Posterior cingulate gyrus (tissue), 11 donors: ENCODE measurements at regions of chr11 and their contacts with region 1.

Region 1: DNA sequence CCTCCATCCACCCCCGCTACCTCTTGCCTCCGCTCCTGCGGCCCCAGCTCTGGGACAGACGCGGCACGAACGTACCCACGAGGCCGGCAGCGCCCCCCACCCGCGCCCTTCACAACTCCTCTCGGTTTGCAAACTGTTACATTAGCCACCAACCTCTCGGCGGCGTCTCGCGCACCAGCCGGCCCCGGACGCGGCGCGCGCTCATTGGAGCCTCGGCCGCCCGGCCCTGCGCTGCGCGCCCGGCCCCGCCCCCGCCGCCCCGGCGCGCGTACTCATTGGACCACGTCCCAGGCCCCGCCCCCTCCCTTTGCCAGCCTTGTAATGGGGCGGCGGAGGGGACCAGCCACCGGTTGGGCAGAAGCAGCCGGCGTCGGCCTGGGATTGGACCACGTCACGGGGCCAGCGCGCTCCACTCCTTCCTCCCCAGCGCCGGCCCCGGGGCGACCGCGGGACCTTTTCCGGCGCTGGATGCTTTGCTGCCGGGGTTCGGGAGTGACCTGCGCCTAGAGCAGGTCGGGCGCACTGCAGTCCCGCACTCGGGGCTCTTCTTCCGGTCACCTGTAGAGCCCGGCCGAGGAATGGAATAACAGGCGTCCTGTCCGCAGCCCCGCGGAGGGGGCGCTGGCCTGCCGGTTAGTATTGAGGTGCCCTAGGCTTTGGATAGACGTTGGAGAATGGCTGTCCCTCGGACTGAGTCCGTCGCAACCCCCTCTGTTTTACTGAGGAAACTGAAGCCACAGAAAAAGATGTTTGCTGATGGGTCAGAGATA is at the start of gene HYOU1:
- DNase-seq: peak; percentile 93 to 99 (median 96)

Region 2: GRCh38 chr11:119018074-119018938 is 38.9 kb before region 1 on chr11 and contains the starts of genes RPS25 and TRAPPC4:
- intact Hi-C with region 1: loop called (anchors 5 kb)
- DNase-seq: peak; percentile 97 to 100 (median 98)

Region 3: DNA sequence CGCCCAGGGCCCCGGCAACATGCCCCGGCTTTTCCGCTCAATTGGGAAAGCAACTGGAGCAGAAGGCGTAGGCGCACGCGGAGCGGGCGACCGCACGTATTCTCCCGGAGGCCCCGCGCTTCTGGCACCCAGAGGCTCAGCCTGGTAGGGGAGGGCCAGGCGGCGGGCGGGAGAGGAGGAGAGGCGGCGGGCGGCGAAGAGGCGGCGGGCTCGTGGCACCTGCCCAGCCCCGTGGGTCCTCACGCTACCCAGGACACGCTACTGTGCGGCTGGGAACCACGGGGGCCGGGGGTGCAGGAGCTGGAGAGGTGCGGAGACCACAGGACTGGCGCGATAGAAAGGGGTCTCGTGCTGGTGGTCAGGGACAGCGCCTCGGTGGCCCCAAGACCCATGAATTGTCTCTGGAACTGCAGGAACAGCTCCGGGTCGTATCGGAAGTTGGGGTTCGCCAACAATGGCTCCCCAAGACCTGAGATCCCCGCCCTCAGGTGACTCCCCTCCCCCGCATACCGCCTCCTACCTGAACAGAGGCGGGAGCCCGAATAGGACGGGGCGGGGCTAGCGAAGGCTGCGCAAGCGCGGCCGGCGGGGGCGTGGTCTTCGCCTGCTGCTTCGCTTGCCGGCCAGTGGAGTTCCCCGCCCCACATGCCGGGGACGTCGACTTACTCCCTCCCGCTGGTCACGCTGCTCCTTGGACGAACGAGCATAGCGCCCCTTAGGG is 26.7 kb before region 1 on chr11 and contains the start of gene SLC37A4:
- intact Hi-C with region 1: loop called (anchors 2 kb)
- DNase-seq: peak; percentile 94 to 100 (median 98)

Region 4: DNA sequence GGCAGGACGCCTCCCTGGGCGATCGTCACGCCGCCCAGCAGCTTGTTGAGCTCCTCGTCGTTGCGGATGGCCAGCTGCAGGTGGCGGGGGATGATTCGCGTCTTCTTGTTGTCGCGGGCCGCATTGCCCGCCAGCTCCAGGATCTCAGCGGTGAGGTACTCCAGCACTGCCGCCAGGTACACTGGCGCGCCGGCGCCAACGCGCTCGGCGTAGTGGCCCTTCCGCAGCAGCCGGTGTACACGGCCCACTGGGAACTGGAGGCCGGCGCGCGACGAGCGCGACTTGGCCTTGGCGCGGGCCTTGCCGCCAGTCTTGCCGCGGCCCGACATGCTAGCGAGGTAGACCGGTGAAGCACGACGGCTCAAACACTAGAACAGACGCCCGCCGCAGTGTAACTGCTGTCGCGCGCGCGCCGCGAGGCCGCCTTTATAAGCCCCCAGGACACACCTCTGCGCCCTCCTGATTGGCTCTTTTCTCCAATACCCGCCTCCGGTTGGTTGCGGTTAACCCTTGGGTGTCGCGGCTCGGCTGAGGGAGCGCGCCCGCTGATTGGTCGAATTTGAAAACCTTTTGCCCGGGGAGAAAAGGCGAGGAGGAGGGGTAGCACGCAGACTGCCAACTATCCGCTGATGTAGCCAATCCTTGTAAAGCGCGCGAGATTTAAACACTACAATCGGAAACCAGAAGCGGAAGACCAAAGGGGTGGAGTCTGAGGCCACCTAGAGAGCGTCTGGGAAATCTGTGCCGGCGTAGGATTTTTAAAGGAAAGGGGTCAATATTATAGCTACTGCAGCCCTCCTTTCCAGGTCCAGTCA is 38.1 kb after region 1 on chr11:
- intact Hi-C with region 1: loop called (anchors 2 kb)
- DNase-seq: peak; percentile 99 to 100 (median 100)